ENCODE measurements at regions of chr3 and their contacts with region 1.

Region 1: GRCh38 chr3:71495708-71496472 is 87.6 kb downstream of the FOXP1 start:
- DNase-seq: peak; percentile 89
- H3K4me3 Mint-ChIP-seq: peak overlapping the region; percentile 80
- H3K27ac Mint-ChIP-seq: peak overlapping the region; percentile 96
- H3K4me1 Mint-ChIP-seq: peaks cover 24% of the 10 kb centered on the region
- H3K27me3 Mint-ChIP-seq: no peaks in the 10 kb centered on the region
- CTCF ChIP-seq: no peak

Region 2: GRCh38 chr3:71057526-71057894 is 438.4 kb before region 1 on chr3:
- CTCF ChIA-PET with region 1: interaction called, 3 read pairs
- POLR2A ChIA-PET with region 1: interaction called, 32 read pairs
- intact Hi-C with region 1: loop called (anchors 2 kb)
- DNase-seq: peak; percentile 66
- H3K4me3 Mint-ChIP-seq: peak overlapping the region; percentile 63
- H3K27ac Mint-ChIP-seq: peak overlapping the region; percentile 94
- H3K4me1 Mint-ChIP-seq: peaks cover 72% of the 10 kb centered on the region
- H3K27me3 Mint-ChIP-seq: no peaks in the 10 kb centered on the region
- CTCF ChIP-seq: no peak

Region 3: GRCh38 chr3:71160800-71161546 is 334.9 kb before region 1 on chr3:
- CTCF ChIA-PET with region 1: no interaction called
- POLR2A ChIA-PET with region 1: no interaction called
- intact Hi-C with region 1: no loop called
- DNase-seq: peak; percentile 23
- H3K4me3 Mint-ChIP-seq: no peak overlapping the region
- H3K27ac Mint-ChIP-seq: no peak overlapping the region
- H3K4me1 Mint-ChIP-seq: peaks cover 16% of the 10 kb centered on the region
- H3K27me3 Mint-ChIP-seq: no peaks in the 10 kb centered on the region
- CTCF ChIP-seq: no peak

Region 4: DNA sequence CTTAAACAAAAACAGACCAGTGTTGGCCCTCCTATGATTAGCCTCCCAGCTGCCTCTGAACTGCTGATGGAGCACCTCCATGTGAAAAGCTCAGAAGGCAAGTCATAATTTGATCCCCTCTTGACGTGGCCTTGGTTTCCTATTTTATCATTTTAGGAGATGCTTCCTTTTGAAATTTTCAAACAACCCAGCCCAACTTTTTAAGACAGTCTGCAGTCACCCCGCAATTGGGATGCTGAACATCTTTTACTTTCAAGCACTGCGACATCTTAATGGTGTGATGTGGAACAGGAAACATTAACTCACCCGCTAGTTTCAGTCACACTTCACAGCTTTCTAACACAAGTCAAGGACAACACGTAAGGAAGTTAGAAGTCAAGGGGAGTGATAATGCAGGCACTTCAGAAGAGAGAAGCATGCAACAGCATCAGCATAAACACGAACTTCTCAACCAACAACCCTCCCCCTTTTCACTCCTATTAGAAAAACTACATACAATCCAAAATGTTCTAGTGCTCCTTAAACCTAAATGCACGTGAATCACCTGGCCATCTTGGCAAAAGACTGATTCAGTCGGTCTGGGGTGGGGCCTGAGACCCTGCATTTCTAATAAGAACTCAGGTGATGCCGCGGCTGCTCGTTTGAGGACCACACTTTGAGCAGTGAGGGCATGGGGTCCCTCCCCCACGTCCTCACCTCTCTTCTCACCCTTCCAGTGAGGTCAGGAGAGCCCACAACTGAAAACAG is 73.9 kb before region 1 on chr3:
- CTCF ChIA-PET with region 1: interaction called, 17 read pairs
- POLR2A ChIA-PET with region 1: interaction called, 22 read pairs
- intact Hi-C with region 1: loop called (anchors 5 kb)
- DNase-seq: no peak
- H3K4me3 Mint-ChIP-seq: no peak overlapping the region
- H3K27ac Mint-ChIP-seq: peak overlapping the region; percentile 76
- H3K4me1 Mint-ChIP-seq: peaks cover 46% of the 10 kb centered on the region
- H3K27me3 Mint-ChIP-seq: no peaks in the 10 kb centered on the region
- CTCF ChIP-seq: no peak

Region 5: DNA sequence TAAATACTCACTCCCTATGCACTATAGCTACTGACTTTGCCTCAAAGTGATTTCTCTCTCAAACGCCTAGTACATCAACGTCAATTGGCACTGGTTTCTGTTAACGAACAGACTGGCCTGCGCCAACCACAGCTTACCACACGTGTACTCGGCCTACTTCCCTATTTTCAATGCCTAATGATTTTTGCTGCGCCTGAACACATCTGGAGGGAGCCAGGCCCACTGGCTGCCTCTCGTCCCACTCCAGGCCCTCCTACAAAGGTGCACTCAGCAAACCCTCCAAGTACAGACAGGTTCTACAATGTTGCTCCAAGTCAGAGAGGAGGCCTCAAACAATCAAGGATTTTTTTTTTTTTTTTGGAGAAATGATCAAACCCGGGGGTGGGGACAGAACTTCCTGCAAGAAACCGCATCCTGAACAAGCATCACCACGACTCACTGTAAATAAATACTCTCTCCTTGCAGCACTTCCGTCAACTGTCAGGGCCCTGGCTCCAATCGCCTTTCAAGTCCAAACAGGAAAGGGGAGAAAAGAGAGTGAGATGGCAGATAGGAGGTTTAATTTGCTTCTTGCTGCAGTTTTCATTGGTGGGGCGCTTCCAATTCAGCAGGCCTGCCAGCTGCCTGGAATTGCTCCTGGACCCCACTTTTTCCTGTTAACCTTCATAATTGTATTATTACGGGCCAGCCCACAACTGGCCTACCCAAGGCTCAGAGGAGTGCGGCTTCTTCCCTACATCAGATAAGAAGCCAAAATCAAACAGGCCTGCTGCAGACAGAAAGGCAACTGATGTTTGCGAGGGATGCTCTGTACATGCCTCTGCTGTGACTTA is 51.6 kb before region 1 on chr3:
- CTCF ChIA-PET with region 1: no interaction called
- POLR2A ChIA-PET with region 1: interaction called, 17 read pairs
- intact Hi-C with region 1: no loop called
- DNase-seq: peak; percentile 91
- H3K4me3 Mint-ChIP-seq: peak overlapping the region; percentile 31
- H3K27ac Mint-ChIP-seq: peak overlapping the region; percentile 95
- H3K4me1 Mint-ChIP-seq: peaks cover 61% of the 10 kb centered on the region
- H3K27me3 Mint-ChIP-seq: no peaks in the 10 kb centered on the region
- CTCF ChIP-seq: no peak

Region 6: DNA sequence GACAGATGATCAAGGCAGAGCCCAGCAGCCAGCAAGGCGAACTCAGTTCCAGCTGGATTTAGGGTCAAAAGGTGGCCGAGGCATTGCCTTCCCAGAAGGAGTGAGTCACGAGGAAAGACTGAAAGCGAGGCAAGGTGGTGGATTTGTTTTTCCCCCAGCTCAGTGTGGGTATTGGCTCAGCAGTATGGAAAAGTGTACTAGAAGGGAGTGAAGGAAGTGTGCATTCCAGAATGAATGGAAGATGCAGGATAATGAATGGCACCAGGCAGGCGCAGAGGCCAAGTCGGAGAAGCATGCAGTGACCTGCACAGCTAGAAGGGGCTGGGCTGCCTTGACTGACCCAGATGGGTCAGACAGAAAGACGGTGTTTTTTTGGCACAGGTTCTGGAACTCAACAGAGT is 41.3 kb after region 1 on chr3:
- CTCF ChIA-PET with region 1: interaction called, 6 read pairs
- POLR2A ChIA-PET with region 1: interaction called, 104 read pairs
- intact Hi-C with region 1: loop called (anchors 5 kb)
- DNase-seq: peak; percentile 98
- H3K4me3 Mint-ChIP-seq: peak overlapping the region; percentile 10
- H3K27ac Mint-ChIP-seq: peak overlapping the region; percentile 52
- H3K4me1 Mint-ChIP-seq: peaks cover 59% of the 10 kb centered on the region
- H3K27me3 Mint-ChIP-seq: no peaks in the 10 kb centered on the region
- CTCF ChIP-seq: no peak

Region 7: DNA sequence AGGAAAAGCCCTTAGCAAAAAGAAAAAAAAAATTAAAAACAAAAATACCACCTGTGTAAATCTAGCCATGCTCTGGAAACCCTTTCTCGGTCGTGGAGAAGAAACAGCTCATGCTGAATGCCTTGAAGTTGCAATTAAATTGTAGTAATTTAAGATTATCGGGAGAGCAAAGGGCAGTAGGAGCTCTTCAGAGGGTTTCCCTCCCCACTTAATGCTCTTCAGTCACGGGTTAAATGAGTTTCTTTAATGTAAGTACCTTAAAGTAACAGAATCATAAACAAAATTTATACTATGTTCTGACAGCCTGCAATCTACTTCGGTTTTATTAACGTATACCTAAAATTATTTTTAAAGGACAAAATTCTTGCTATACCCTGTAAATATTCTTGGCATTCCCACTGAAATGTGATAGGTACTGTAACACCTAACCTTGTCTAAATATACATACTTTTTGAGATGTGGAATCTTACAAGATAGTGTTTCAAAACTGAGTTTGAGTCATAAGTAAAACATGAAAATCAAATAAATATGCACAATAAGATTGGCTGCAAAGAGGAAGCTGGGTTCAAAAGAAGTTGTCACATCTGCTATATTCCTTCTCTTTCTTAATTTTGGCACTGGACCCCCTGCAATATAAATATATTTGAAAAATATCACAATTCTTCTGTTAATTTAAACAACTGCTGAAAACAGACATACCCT is 82.3 kb after region 1 on chr3:
- CTCF ChIA-PET with region 1: interaction called, 6 read pairs
- POLR2A ChIA-PET with region 1: interaction called, 90 read pairs
- intact Hi-C with region 1: loop called (anchors 1 kb)
- DNase-seq: peak; percentile 51
- H3K4me3 Mint-ChIP-seq: peak overlapping the region; percentile 38
- H3K27ac Mint-ChIP-seq: peak overlapping the region; percentile 76
- H3K4me1 Mint-ChIP-seq: peaks cover 31% of the 10 kb centered on the region
- H3K27me3 Mint-ChIP-seq: no peaks in the 10 kb centered on the region
- CTCF ChIP-seq: no peak

Region 8: DNA sequence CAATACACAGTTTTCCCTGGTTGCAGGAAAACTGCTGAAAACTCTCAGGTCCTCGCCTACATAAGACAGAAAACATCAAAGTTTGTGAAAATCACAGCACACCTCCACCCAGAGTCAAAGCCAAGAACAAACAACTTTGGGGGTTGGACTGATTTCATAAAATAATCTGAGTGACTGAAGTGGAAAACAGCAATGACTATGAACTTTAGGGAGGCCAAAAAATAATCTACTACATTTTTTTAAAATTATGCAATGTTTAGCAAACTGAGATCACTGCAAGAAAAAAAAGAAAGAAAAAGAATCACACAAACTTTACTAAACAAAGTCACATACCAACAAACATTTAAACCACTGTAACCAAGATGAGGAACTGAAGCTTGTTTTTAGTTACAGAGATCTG is 103.5 kb after region 1 on chr3:
- CTCF ChIA-PET with region 1: no interaction called
- POLR2A ChIA-PET with region 1: no interaction called
- intact Hi-C with region 1: no loop called
- DNase-seq: no peak
- H3K4me3 Mint-ChIP-seq: no peak overlapping the region
- H3K27ac Mint-ChIP-seq: no peak overlapping the region
- H3K4me1 Mint-ChIP-seq: peaks cover 15% of the 10 kb centered on the region
- H3K27me3 Mint-ChIP-seq: no peaks in the 10 kb centered on the region
- CTCF ChIP-seq: no peak

Region 9: GRCh38 chr3:71725279-71725991 is 229.5 kb after region 1 on chr3 and contains the start of gene EIF4E3:
- CTCF ChIA-PET with region 1: no interaction called
- POLR2A ChIA-PET with region 1: no interaction called
- intact Hi-C with region 1: no loop called
- DNase-seq: peak; percentile 17
- H3K4me3 Mint-ChIP-seq: peak within 1 kb of the TSS; percentile 77
- H3K27ac Mint-ChIP-seq: peak within 1 kb of the TSS; percentile 5
- H3K4me1 Mint-ChIP-seq: no peaks in the 10 kb centered on the region
- H3K27me3 Mint-ChIP-seq: no peaks in the 10 kb centered on the region
- CTCF ChIP-seq: no peak
- total RNA-seq, gene EIF4E3: 4.3 and 7.6 TPM in 2 replicates